PC-9 (cell line): ENCODE measurements at regions of chr3 and their contacts with region 1.

Region 1: DNA sequence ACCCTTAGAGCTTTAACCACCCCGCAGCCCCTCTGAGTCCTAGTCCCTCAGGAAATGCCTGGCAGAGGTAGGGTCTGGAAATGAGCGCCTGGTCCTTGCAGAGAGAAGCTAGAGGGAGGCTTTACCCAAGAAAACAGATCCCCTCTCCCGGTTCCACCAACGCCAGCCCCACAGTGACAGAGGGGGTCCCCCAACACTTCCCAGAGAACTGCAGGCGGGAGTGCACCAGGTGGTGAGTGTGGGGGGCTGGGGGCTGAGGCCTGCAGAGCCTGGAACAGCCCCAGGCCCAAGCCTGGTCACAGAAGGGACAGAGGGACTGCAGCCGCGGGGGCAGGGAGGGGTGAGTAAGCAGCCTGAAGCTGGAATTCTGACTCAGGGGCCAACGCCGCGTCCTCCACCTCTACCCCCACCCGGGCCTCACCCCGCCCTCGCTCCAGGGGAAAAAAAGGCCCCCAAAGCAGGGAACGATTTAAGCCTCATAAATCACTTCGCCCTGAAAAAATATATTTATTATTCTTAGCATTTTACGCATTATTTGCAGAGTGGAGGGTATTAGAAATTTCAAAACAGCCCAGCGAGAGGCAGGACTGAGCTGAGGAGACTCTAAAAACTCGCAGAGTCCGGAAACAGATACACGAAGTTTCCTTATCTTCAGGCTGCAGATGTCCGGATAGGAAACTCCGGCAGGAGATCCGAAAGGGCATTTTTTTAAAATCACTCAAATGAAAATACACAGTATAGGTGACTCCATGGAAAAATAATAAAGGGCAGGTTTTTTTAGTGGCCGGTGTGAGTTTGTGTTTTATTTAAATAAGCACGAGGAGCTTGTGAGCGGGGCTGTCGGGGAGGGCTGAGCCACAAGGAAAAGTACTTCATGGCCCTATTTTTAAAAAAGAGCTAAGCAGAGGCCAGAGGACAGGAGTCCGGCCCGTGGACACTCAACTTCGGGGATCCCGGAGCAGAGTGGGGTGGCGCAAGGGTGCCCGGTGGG is 10.0 kb downstream of the GATA2 start:
- DNase-seq: peak; percentile 73 to 83
- H3K4me3 ChIP-seq: peak overlapping the region; percentile 47
- H3K27ac ChIP-seq: peak overlapping the region; percentile 47
- H3K4me1 ChIP-seq: peaks cover 44% of the 10 kb centered on the region
- H3K27me3 ChIP-seq: no peaks in the 10 kb centered on the region
- CTCF ChIP-seq: no peak

Region 2: GRCh38 chr3:127889461-127889863 is 593.5 kb before region 1 on chr3:
- CTCF ChIA-PET with region 1: no interaction called
- POLR2A ChIA-PET with region 1: no interaction called
- intact Hi-C with region 1: no loop called
- DNase-seq: no peak
- H3K4me3 ChIP-seq: no peak overlapping the region
- H3K27ac ChIP-seq: no peak overlapping the region; the same call in 1 of the 2 replicates
- H3K4me1 ChIP-seq: 0 out of 2 replicates have a peak, but pooled peaks cover 5% of the 10 kb centered on the region
- H3K27me3 ChIP-seq: no peaks in the 10 kb centered on the region
- CTCF ChIP-seq: no peak

Region 3: DNA sequence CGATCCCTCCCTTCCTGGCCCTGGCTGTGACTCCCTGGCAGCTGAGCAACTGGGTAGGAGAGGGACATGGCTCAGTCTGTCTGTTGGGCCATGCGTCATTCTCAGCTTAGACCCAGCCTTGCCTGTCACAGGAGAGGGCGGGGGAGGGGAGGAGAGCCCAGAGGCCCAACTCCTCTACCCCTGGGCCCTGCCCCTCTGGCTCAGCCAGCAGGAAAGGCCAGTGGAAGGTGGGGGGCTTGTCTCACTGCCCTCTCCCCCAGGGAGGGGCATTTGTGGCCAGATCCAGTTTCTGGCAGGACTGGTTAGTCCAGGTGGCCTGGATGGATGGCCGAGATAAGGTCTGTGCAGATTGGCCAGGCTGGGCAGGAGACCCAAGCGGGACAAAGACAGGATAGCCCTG is 47.9 kb before region 1 on chr3:
- CTCF ChIA-PET with region 1: interaction called, 3 read pairs
- POLR2A ChIA-PET with region 1: interaction called, 4 read pairs
- intact Hi-C with region 1: loop called (anchors 1 kb)
- DNase-seq: peak; percentile 99
- H3K4me3 ChIP-seq: peak overlapping the region; percentile 16; the same call in 1 of the 2 replicates
- H3K27ac ChIP-seq: peak overlapping the region; percentile 77
- H3K4me1 ChIP-seq: peaks cover 63% of the 10 kb centered on the region
- H3K27me3 ChIP-seq: no peaks in the 10 kb centered on the region
- CTCF ChIP-seq: no peak

Region 4: DNA sequence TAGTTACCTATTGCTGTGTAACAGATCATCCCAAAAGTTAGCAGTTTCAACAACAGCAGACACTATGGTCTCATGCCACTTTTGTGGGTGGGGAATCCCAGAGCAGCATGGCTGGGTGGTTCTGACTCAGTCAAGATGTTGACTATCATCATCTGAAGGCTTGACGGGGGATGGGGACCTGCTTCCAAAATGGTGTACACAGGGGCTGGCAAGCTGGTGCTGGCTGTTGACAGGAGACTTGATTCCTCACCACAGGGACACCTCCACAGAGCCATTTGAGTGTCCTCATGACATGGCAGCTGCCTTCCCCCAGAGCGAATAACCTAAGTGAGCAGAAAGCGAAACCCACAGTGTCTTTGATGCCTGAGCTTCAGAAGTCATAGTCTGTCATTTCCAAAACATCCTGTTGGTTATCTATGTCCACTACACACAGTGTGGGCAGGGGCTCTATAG is 35.4 kb before region 1 on chr3:
- CTCF ChIA-PET with region 1: interaction called, 11 read pairs
- POLR2A ChIA-PET with region 1: no interaction called
- intact Hi-C with region 1: no loop called
- DNase-seq: no peak
- H3K4me3 ChIP-seq: no peak overlapping the region
- H3K27ac ChIP-seq: no peak overlapping the region
- H3K4me1 ChIP-seq: no peaks in the 10 kb centered on the region
- H3K27me3 ChIP-seq: no peaks in the 10 kb centered on the region
- CTCF ChIP-seq: no peak

Region 5: GRCh38 chr3:128591738-128592426 is 108.9 kb after region 1 on chr3:
- CTCF ChIA-PET with region 1: no interaction called
- POLR2A ChIA-PET with region 1: interaction called, 37 read pairs
- intact Hi-C with region 1: no loop called
- DNase-seq: no peak
- H3K4me3 ChIP-seq: no peak overlapping the region
- H3K27ac ChIP-seq: no peak overlapping the region
- H3K4me1 ChIP-seq: peaks cover under 1% of the 10 kb centered on the region; the same call in 1 of the 2 replicates
- H3K27me3 ChIP-seq: no peaks in the 10 kb centered on the region
- CTCF ChIP-seq: no peak